ENCODE measurements at regions of chr19 and their contacts with region 1.

Region 1: DNA sequence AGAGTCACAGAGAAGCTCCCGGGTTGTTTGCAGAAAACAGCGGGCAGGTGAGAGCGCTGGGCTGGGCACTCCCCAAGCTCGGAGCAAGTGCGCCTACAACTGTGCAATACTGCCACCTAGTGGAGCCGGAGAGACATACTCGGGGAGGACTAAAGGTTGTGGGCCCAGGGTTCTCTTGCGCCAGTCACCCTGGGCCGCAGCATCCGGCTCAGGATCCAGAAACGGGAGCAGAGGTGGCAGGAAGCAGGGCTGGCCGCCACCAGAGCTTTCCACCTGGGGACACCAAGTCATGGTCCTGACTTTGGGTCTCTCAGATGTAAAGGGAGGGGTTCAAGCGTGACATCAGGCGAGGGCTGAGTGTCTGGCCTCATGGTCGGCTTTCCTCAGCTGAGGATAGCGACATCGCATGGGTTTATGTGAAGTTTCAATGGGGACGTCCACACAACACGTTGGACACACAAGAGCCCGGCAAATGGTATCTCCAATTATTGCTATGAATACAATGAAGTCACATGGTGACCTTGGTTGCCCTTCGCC is 11.2 kb upstream of the KLK4 start:
- DNase-seq: peak; percentile 80
- H3K4me3 Mint-ChIP-seq: no peak overlapping the region
- H3K27ac Mint-ChIP-seq: no peak overlapping the region
- H3K4me1 Mint-ChIP-seq: peaks cover 9% of the 10 kb centered on the region
- H3K27me3 Mint-ChIP-seq: peaks cover 21% of the 10 kb centered on the region

Region 2: DNA sequence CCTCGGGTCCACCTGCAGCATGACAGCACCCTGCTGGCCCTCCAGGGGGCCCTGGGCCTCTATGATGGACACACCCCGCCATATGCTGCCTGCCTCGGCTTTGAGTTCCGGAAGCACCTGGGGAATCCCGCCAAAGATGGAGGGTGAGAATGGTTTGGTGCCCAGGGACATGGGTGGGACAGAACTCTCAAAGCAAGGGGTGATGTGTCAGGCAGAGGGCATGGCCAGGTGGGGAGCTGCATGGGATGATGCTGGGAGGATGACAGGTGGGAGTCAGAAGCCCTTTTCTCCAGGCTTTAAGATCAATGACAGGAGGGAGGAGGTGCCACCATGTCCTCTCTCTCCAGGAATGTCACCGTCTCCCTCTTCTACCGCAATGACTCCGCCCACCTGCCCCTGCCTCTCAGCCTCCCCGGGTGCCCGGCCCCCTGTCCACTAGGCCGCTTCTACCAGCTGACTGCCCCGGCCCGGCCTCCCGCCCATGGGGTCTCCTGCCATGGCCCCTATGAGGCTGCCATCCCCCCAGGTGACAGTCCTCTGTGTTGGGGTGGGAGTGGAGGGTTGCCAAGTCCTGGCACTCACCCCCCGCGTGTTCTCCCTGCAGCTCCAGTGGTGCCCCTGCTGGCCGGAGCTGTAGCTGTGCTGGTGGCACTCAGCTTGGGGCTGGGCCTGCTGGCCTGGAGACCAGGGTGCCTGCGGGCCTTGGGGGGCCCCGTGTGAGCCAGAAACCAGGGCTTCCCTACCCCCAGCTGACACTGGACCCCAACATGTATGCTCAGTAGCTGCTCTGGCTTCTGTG is 127.7 kb before region 1 on chr19:
- CTCF ChIA-PET with region 1: interaction called, 10 read pairs
- POLR2A ChIA-PET with region 1: no interaction called
- DNase-seq: peak; percentile 29
- H3K4me3 Mint-ChIP-seq: no peak overlapping the region
- H3K27ac Mint-ChIP-seq: peak overlapping the region; percentile 31
- H3K4me1 Mint-ChIP-seq: peaks cover 5% of the 10 kb centered on the region
- H3K27me3 Mint-ChIP-seq: no peaks in the 10 kb centered on the region

Region 3: GRCh38 chr19:50858896-50859295 is 63.5 kb before region 1 on chr19:
- CTCF ChIA-PET with region 1: no interaction called
- POLR2A ChIA-PET with region 1: no interaction called
- DNase-seq: no peak
- H3K4me3 Mint-ChIP-seq: no peak overlapping the region
- H3K27ac Mint-ChIP-seq: no peak overlapping the region
- H3K4me1 Mint-ChIP-seq: no peaks in the 10 kb centered on the region
- H3K27me3 Mint-ChIP-seq: peaks cover 15% of the 10 kb centered on the region

Region 4: DNA sequence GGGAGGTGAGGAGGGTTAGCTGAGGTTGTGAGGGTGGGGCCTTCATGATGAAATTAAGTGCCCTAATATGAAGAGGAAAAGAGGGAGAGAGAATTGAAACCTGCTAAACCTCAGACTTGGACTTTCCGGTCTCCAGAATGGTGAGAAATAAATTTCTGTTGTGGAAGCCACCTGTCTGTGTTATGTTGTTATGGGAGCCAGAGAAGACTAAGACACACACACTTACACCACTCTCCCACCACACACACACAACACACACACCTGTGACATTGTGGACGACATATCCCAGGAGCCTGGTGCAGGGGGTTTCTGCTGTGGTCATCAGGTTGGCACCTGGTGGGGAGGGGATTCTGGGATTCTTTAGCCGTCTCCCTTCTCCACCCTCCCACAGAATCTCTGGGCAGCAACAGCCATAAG is 25.2 kb before region 1 on chr19:
- CTCF ChIA-PET with region 1: interaction called, 10 read pairs
- POLR2A ChIA-PET with region 1: no interaction called
- DNase-seq: no peak
- H3K4me3 Mint-ChIP-seq: no peak overlapping the region
- H3K27ac Mint-ChIP-seq: no peak overlapping the region
- H3K4me1 Mint-ChIP-seq: no peaks in the 10 kb centered on the region
- H3K27me3 Mint-ChIP-seq: peaks cover 7% of the 10 kb centered on the region

Region 5: DNA sequence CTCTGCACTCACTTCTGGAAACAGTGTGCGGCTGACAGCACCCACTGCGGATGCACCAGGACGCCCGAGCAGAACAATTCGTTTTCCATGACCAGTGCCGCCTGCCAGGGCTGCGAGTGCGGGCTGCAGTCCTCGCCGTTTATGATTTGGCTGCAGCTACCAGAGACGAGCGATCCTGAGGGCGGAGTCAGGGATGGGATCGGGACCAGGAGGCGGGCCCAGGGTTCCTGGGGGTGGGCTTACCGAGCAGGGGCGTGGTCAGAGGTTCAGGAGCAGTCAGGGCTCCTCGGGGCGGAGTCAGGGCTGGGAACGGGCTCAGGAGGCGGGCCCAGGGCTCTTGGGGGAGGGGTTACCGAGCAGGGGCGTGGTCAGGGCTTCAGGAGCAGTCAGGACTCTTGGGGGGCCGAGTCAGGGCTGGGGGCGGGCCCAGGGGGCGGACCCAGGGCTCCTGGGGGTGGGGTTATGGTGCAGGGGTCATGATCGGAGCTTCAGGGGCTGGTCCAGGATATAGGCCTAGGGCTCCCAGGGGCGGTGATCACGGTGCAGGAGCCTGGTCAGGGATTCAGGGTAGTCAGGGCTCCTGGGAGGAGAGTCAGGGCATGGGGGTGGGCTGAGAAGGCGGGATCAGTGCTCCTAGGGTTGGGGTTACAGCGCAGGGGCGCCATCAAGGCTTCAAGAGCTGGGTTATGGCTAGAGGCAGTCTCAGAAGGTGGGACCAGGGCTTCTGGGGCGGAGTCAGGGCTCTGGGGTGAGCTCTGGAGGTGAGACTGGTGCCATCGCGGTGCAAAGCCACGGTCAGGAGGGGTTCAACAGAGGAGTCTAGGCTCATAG is 12.9 kb before region 1 on chr19:
- CTCF ChIA-PET with region 1: interaction called, 12 read pairs
- POLR2A ChIA-PET with region 1: no interaction called
- DNase-seq: peak; percentile 37
- H3K4me3 Mint-ChIP-seq: no peak overlapping the region
- H3K27ac Mint-ChIP-seq: no peak overlapping the region
- H3K4me1 Mint-ChIP-seq: no peaks in the 10 kb centered on the region
- H3K27me3 Mint-ChIP-seq: peaks cover 35% of the 10 kb centered on the region

Measured in activated CD4-positive, alpha-beta memory T cell treated with anti-CD3 and anti-CD28 coated beads, Interleukin-2, amount 10 ng/mL, durations not matched to agents 7 days and 5 days (primary cell).